B cell (primary cell): ENCODE measurements at regions of chr14 and their contacts with region 1.

Region 1: GRCh38 chr14:64294672-64295413 is 672 bp upstream of the ESR2 start:
- DNase-seq: peak; percentile 93
- ATAC-seq: peak; percentile 90
- H3K4me3 ChIP-seq: peak overlapping the region; percentile 56 to 90 (median 61)
- H3K4me3 Mint-ChIP-seq: peak overlapping the region; percentile 95
- H3K27ac ChIP-seq: peak overlapping the region; percentile 26 to 67
- H3K27ac Mint-ChIP-seq: peak overlapping the region; percentile 87
- H3K4me1 ChIP-seq: peaks cover 14 to 19% of the 10 kb centered on the region in 2 donors
- H3K4me1 Mint-ChIP-seq: peaks cover 30% of the 10 kb centered on the region
- H3K27me3 ChIP-seq: no peaks in the 10 kb centered on the region
- H3K27me3 Mint-ChIP-seq: no peaks in the 10 kb centered on the region
- CTCF ChIP-seq: peak; percentile 87

Region 2: GRCh38 chr14:63852817-63853731 is 441.8 kb before region 1 on chr14 and contains the start of gene SYNE2:
- CTCF ChIA-PET with region 1: no interaction called
- POLR2A ChIA-PET with region 1: no interaction called
- intact Hi-C with region 1: loop called (anchors 2 kb)
- DNase-seq: peak; percentile 89
- ATAC-seq: peak; percentile 84
- H3K4me3 ChIP-seq: peak within 1 kb of the TSS; percentile 46 to 72 (median 64)
- H3K4me3 Mint-ChIP-seq: peak within 1 kb of the TSS; percentile 94
- H3K27ac ChIP-seq: peak within 1 kb of the TSS; percentile 30 to 43
- H3K27ac Mint-ChIP-seq: peak within 1 kb of the TSS; percentile 95
- H3K4me1 ChIP-seq: peaks cover 13 to 14% of the 10 kb centered on the region in 2 donors
- H3K4me1 Mint-ChIP-seq: peaks cover 27% of the 10 kb centered on the region
- H3K27me3 ChIP-seq: peaks cover 0 to 6% (median 0%) of the 10 kb centered on the region in 4 experiments
- H3K27me3 Mint-ChIP-seq: no peaks in the 10 kb centered on the region
- CTCF ChIP-seq: peak; percentile 33
- total RNA-seq, gene SYNE2: 105 TPM in 2 replicates

Region 3: DNA sequence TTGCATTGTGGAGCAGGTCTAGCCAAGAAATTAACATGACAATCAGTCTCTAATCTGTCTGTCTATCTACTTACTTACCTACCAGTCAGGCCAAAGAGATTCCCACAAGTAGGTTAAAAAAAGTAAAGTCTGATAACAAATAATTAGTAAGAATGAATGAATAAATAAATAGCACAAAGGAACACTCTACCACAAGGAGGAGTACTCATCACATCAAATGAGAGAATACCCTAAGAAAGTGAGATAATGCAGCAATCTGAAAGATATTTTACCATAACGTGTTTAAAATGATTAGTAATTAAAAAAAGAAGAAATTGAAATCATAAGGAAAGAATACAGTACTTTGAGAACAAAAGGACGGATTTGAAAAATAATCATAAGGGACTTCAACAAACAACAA is 254.8 kb before region 1 on chr14:
- CTCF ChIA-PET with region 1: interaction called, 7 read pairs
- POLR2A ChIA-PET with region 1: no interaction called
- intact Hi-C with region 1: loop called (anchors 2 kb)
- DNase-seq: peak; percentile 12
- ATAC-seq: no peak
- H3K4me3 ChIP-seq: no peak overlapping the region
- H3K4me3 Mint-ChIP-seq: no peak overlapping the region
- H3K27ac ChIP-seq: no peak overlapping the region
- H3K27ac Mint-ChIP-seq: no peak overlapping the region
- H3K4me1 ChIP-seq: no peaks in the 10 kb centered on the region
- H3K4me1 Mint-ChIP-seq: no peaks in the 10 kb centered on the region
- H3K27me3 ChIP-seq: no peaks in the 10 kb centered on the region
- H3K27me3 Mint-ChIP-seq: no peaks in the 10 kb centered on the region
- CTCF ChIP-seq: peak; percentile 34

Region 4: DNA sequence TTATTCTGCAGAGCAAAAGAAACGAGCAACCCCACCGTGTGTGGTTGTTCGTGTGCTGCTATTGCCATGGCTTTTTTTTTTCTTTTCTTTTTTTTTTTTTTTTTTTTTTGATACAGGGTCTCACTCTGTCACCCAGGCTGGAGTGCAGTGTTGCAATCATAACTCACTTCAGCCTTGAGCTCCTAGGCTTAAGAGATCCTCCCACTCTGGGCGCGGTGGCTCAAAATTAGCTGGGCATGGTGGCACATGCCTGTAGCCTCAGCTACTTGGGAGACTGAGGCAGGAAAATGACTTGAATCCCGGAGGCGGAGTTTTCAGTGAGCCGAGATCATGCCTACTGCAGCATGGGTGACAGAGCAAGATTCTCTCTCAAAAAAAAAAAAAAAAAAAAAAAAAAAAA is 144.9 kb before region 1 on chr14:
- CTCF ChIA-PET with region 1: interaction called, 12 read pairs
- POLR2A ChIA-PET with region 1: no interaction called
- intact Hi-C with region 1: no loop called
- DNase-seq: no peak
- ATAC-seq: no peak
- H3K4me3 ChIP-seq: no peak overlapping the region
- H3K4me3 Mint-ChIP-seq: no peak overlapping the region
- H3K27ac ChIP-seq: no peak overlapping the region
- H3K27ac Mint-ChIP-seq: no peak overlapping the region
- H3K4me1 ChIP-seq: no peaks in the 10 kb centered on the region
- H3K4me1 Mint-ChIP-seq: no peaks in the 10 kb centered on the region
- H3K27me3 ChIP-seq: no peaks in the 10 kb centered on the region
- H3K27me3 Mint-ChIP-seq: no peaks in the 10 kb centered on the region
- CTCF ChIP-seq: no peak

Region 5: DNA sequence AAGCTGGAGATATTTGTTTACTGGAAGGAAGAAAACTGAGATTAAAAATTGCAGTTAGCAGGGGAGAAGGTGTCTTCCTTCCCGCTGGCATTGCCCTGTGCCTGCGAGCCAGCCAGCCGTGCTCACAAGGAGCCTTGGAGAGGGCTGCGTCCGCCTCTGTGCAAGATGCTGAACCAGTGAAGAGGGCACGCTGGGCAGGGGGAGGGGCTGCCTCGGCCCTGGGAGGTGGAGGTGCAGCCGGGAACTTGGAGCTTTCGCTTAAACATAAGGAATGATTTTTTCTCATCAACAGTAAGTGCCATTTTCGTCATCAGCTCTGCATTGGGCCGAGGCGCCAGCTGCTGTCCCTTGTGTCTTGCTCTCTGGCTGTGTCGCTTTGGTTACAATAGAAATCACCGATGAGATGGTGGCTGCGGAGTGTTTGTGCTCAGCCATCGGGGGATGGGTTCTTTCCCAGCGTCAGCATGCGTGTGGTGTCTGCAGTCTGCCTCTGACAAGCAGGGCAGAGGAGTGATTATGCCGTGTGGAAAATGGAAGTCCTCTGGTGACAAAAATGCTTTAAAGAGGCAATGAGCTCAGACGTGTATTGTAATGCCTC is 97.9 kb before region 1 on chr14:
- CTCF ChIA-PET with region 1: interaction called, 13 read pairs
- POLR2A ChIA-PET with region 1: interaction called, 3 read pairs
- intact Hi-C with region 1: no loop called
- DNase-seq: peak; percentile 84
- ATAC-seq: peak; percentile 82
- H3K4me3 ChIP-seq: peak overlapping the region in 4 of 5 experiments; percentile 40 to 53 (median 46)
- H3K4me3 Mint-ChIP-seq: peak overlapping the region; percentile 90
- H3K27ac ChIP-seq: peak overlapping the region; percentile 94 to 98
- H3K27ac Mint-ChIP-seq: peak overlapping the region; percentile 94
- H3K4me1 ChIP-seq: peaks cover 51 to 53% of the 10 kb centered on the region in 2 donors
- H3K4me1 Mint-ChIP-seq: peaks cover 57% of the 10 kb centered on the region
- H3K27me3 ChIP-seq: no peaks in the 10 kb centered on the region
- H3K27me3 Mint-ChIP-seq: no peaks in the 10 kb centered on the region
- CTCF ChIP-seq: no peak

Region 6: GRCh38 chr14:64232095-64232838 is 62.6 kb before region 1 on chr14:
- CTCF ChIA-PET with region 1: interaction called, 60 read pairs
- POLR2A ChIA-PET with region 1: interaction called, 27 read pairs
- intact Hi-C with region 1: loop called (anchors 1 kb)
- DNase-seq: peak; percentile 31
- ATAC-seq: peak; percentile 7
- H3K4me3 ChIP-seq: no peak overlapping the region
- H3K4me3 Mint-ChIP-seq: peak overlapping the region; percentile 73
- H3K27ac ChIP-seq: no peak overlapping the region
- H3K27ac Mint-ChIP-seq: peak overlapping the region; percentile 96
- H3K4me1 ChIP-seq: peaks cover 49 to 53% of the 10 kb centered on the region in 2 donors
- H3K4me1 Mint-ChIP-seq: peaks cover 56% of the 10 kb centered on the region
- H3K27me3 ChIP-seq: no peaks in the 10 kb centered on the region
- H3K27me3 Mint-ChIP-seq: no peaks in the 10 kb centered on the region
- CTCF ChIP-seq: no peak